ENCODE measurements at regions of chr13 and their contacts with region 1.

Region 1: DNA sequence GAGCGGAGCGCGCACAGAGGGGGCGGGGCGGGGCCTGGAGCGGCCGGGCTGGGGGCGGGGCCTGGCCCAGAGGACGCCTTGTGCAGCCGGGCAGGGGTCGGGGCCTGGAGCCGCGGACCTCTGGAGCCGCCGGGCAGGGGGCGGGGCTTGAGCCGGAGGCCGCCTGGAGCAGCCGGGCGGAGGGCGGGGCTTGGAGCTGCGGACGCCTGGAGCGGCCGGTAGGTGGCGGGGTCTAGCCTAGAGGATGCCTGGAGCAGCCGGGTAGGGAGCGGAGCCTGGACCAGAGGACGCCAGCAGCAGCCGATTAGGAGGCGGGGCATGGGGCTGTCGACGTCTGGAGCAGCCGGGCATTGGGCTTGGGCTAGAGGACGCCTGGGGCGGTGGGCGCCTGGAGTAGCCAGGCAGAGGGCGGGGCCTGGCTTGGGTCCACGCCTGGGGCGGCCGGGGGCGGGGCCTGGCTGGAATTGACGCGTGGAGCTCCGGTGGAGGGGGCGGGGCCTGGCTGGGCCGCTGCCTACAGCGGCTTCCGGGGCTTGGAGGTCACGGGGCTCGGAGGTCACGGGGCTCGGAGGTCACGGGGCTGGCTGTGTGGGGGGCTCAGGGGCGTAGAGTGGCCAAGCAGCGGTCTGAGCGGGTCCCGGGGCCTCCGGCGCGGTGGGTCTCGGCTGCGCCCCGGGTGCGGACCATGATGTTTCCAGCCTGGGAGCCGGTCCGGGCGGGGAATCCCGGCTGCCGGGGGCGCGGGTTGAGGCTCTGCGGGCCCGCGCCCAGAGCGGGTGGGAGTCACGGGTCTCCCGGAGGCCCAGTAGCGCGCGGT is at the start of gene ANKRD10:
- DNase-seq: peak; percentile 98
- ATAC-seq: peak; percentile 80
- H3K4me3 Mint-ChIP-seq: peak within 1 kb of the TSS; percentile 89
- H3K27ac Mint-ChIP-seq: peak within 1 kb of the TSS; percentile 91
- H3K4me1 Mint-ChIP-seq: peaks cover 58% of the 10 kb centered on the region
- H3K27me3 Mint-ChIP-seq: no peaks in the 10 kb centered on the region
- CTCF ChIP-seq: no peak
- total RNA-seq, gene ANKRD10: 212 and 256 TPM in 2 replicates

Region 2: DNA sequence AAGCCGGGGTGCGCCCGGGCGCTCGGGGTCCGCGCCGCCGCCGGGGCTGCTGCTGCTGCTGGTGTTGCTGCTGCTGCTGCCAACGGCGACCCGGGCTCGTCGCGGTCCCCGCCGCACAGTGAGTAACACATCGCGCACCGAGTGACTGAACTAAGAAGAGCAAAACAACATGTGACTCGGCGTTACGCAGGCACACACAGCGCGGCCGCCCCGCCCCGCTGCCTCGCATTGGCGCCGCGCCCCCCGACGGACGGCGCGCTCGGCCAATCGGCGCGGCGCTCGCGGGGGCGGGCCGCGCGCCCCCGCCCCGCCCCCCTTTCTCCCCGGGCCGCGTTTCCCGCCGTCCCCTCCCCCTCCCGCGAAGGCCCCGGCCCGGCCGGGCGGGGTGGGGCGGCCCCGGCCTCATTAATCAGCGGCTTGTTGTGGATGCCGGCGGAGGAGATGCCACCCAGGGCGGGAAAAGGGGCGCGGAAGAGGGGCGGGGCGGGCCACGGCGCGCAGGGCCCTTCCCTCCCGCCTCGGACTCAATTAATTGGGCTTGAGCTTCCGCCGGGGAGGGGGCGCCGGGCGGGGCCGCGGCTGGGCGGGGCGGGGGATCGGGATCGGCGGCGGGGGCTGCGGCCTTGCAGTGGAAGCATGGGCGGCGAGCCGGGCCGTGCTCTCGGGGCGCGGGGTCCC is 1128.7 kb before region 1 on chr13 and contains the start of gene IRS2:
- CTCF ChIA-PET with region 1: no interaction called
- POLR2A ChIA-PET with region 1: no interaction called
- intact Hi-C with region 1: loop called (anchors 5 kb)
- DNase-seq: peak; percentile 84
- ATAC-seq: peak; percentile 88
- H3K4me3 Mint-ChIP-seq: peak within 1 kb of the TSS; percentile 86
- H3K27ac Mint-ChIP-seq: peak within 1 kb of the TSS; percentile 56
- H3K4me1 Mint-ChIP-seq: peaks cover under 1% of the 10 kb centered on the region
- H3K27me3 Mint-ChIP-seq: peaks cover 4% of the 10 kb centered on the region
- CTCF ChIP-seq: no peak
- total RNA-seq, gene IRS2: 4.2 and 4.4 TPM in 2 replicates

Region 3: GRCh38 chr13:110615322-110616102 is 299.8 kb before region 1 on chr13 and contains the start of gene NAXD:
- CTCF ChIA-PET with region 1: no interaction called
- POLR2A ChIA-PET with region 1: no interaction called
- intact Hi-C with region 1: loop called (anchors 1 kb)
- DNase-seq: peak; percentile 66
- ATAC-seq: peak; percentile 82
- H3K4me3 Mint-ChIP-seq: peak within 1 kb of the TSS; percentile 94
- H3K27ac Mint-ChIP-seq: peak within 1 kb of the TSS; percentile 89
- H3K4me1 Mint-ChIP-seq: peaks cover 37% of the 10 kb centered on the region
- H3K27me3 Mint-ChIP-seq: no peaks in the 10 kb centered on the region
- CTCF ChIP-seq: no peak
- total RNA-seq, gene NAXD: 31.1 and 32.7 TPM in 2 replicates

Region 4: GRCh38 chr13:110904748-110905147 is 10.5 kb before region 1 on chr13:
- CTCF ChIA-PET with region 1: no interaction called
- POLR2A ChIA-PET with region 1: interaction called, 11 read pairs
- intact Hi-C with region 1: loop called (anchors 1 kb)
- DNase-seq: no peak
- ATAC-seq: no peak
- H3K4me3 Mint-ChIP-seq: no peak overlapping the region
- H3K27ac Mint-ChIP-seq: no peak overlapping the region
- H3K4me1 Mint-ChIP-seq: peaks cover 31% of the 10 kb centered on the region
- H3K27me3 Mint-ChIP-seq: no peaks in the 10 kb centered on the region
- CTCF ChIP-seq: no peak

Region 5: GRCh38 chr13:110965038-110965754 is 49.9 kb after region 1 on chr13:
- CTCF ChIA-PET with region 1: no interaction called
- POLR2A ChIA-PET with region 1: no interaction called
- intact Hi-C with region 1: loop called (anchors 2 kb)
- DNase-seq: no peak
- ATAC-seq: peak; percentile 87
- H3K4me3 Mint-ChIP-seq: no peak overlapping the region
- H3K27ac Mint-ChIP-seq: peak overlapping the region; percentile 30
- H3K4me1 Mint-ChIP-seq: peaks cover 6% of the 10 kb centered on the region
- H3K27me3 Mint-ChIP-seq: peaks cover 8% of the 10 kb centered on the region
- CTCF ChIP-seq: no peak

Region 6: GRCh38 chr13:111153279-111153976 is 238.2 kb after region 1 on chr13:
- CTCF ChIA-PET with region 1: no interaction called
- POLR2A ChIA-PET with region 1: interaction called, 3 read pairs
- intact Hi-C with region 1: loop called (anchors 1 kb)
- DNase-seq: peak; percentile 98
- ATAC-seq: peak; percentile 85
- H3K4me3 Mint-ChIP-seq: peak overlapping the region; percentile 92
- H3K27ac Mint-ChIP-seq: peak overlapping the region; percentile 88
- H3K4me1 Mint-ChIP-seq: peaks cover 30% of the 10 kb centered on the region
- H3K27me3 Mint-ChIP-seq: no peaks in the 10 kb centered on the region
- CTCF ChIP-seq: no peak

Region 7: GRCh38 chr13:111216166-111216960 is 301.1 kb after region 1 on chr13:
- CTCF ChIA-PET with region 1: interaction called, 3 read pairs
- POLR2A ChIA-PET with region 1: interaction called, 5 read pairs
- intact Hi-C with region 1: loop called (anchors 1 kb)
- DNase-seq: no peak
- ATAC-seq: peak; percentile 60
- H3K4me3 Mint-ChIP-seq: no peak overlapping the region
- H3K27ac Mint-ChIP-seq: peak overlapping the region; percentile 59
- H3K4me1 Mint-ChIP-seq: peaks cover 38% of the 10 kb centered on the region
- H3K27me3 Mint-ChIP-seq: no peaks in the 10 kb centered on the region
- CTCF ChIP-seq: no peak